Common myeloid progenitor, CD34-positive (primary cell): ENCODE measurements at regions of chr4 and their contacts with region 1.

Region 1: DNA sequence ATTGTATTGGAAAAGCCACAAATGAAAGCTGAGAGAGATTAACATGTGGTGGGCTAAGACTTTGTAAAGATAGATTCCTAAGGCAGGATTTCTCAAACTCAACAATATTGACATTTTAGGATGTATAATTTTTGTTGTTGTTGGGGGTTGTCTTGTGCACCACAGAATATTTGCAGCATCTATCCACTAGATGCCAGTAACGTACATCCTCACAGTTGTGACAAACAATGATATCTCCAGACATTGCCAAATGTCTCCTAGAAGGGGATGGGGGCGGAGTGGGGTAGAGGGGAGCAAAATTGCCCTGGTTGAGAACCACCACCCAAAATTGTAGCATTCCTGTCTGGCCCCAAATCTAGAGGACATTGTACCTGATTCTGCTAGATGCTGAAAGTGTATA is 14.7 kb upstream of the CBR4 start:
- DNase-seq: peak; percentile 44 to 70 (median 70)
- H3K4me3 ChIP-seq: no peak overlapping the region
- H3K27ac ChIP-seq: no peak overlapping the region
- H3K4me1 ChIP-seq: no peaks in the 10 kb centered on the region
- H3K27me3 ChIP-seq: no peaks in the 10 kb centered on the region

Region 2: DNA sequence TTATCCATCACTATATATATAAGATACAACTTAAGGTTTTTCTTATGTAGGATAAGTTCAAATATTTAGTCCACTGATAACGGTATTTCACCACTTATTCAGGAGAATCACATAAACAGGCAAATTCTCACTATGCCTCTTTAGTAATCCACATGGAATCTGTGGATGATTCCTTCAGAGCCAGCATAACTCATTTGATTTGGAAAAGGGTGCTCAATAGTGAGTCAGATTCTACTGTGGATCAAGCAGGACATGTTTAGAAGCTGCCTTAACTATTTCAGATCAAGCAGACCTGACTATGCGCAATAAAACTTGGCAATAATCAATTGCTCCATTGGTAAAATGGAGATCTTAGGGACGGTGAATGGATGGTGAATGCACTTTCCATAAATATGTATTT is 198.8 kb before region 1 on chr4:
- CTCF ChIA-PET with region 1: no interaction called
- POLR2A ChIA-PET with region 1: no interaction called
- DNase-seq: no peak
- H3K4me3 ChIP-seq: no peak overlapping the region
- H3K27ac ChIP-seq: no peak overlapping the region
- H3K4me1 ChIP-seq: peaks cover 0 to 2% (median 1%) of the 10 kb centered on the region in 4 experiments
- H3K27me3 ChIP-seq: peaks cover 0 to 2% (median 0%) of the 10 kb centered on the region in 5 experiments

Region 3: DNA sequence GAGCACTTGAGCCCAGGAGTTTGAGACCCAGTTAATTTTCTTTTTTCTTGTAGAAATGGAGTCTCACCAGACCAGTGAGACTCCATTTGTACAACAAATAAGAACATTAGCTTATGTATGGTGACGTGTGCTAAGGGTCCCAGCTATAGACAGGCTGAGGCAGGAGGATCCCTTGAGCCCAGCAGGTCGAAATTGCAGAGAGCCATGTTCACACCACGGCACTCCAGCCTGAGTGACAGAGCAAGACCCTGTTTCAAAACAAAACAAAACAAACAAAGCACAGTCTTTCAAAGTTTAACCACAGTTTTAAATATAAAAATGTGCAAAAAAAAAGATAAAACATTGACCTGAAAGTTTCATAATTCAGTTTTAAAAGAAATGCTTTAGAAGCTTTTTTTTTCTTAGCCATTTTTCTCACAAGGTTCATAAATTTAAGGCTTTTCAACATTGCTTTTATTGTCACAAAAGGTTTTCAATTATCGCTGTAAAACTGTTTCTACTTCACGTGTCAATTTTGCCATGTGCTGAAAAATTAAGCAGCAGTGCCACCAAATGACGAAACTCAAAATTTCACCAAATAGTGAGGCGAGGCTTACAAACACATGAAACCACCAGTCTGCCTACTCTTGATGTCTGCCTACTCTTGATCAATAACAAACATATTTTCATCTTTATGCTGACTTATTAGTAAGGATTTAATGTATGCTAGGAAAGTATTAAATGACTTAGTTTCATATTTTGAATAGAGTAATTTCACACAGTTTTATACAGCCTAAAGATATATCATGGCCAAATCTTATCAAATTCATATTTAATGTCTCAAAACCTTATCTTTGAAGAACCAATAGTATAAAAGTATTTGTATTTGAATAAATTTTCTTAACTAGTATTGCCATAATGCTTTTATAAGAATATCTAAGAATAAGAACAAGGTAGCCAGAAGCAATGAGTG is 461.3 kb after region 1 on chr4:
- CTCF ChIA-PET with region 1: interaction called, 19 read pairs
- POLR2A ChIA-PET with region 1: no interaction called
- DNase-seq: peak; percentile 55 to 76 (median 69)
- H3K4me3 ChIP-seq: no peak overlapping the region
- H3K27ac ChIP-seq: no peak overlapping the region
- H3K4me1 ChIP-seq: peaks cover 0 to 4% (median 2%) of the 10 kb centered on the region in 4 experiments
- H3K27me3 ChIP-seq: no peaks in the 10 kb centered on the region

Region 4: GRCh38 chr4:169619959-169620879 is 595.5 kb after region 1 on chr4 and contains the start of gene CLCN3:
- CTCF ChIA-PET with region 1: no interaction called
- POLR2A ChIA-PET with region 1: no interaction called
- DNase-seq: peak; percentile 73 to 85 (median 83)
- H3K4me3 ChIP-seq: peak within 1 kb of the TSS; percentile 54 to 100 (median 88)
- H3K27ac ChIP-seq: peak within 1 kb of the TSS; percentile 82 to 92
- H3K4me1 ChIP-seq: peaks cover 37 to 49% (median 43%) of the 10 kb centered on the region in 4 experiments
- H3K27me3 ChIP-seq: peaks cover 0 to 2% (median 0%) of the 10 kb centered on the region in 5 experiments